Ascending aorta (tissue), 2 donors: ENCODE measurements at regions of chr6 and their contacts with region 1.

Region 1: GRCh38 chr6:5143634-5144311 is 58.6 kb downstream of the PPP1R3G start:
- DNase-seq: peak in 1 of 2 donors; percentile 89
- H3K4me3 ChIP-seq: no peak overlapping the region
- H3K27ac ChIP-seq: no peak overlapping the region
- H3K4me1 ChIP-seq: no peaks in the 10 kb centered on the region
- H3K27me3 ChIP-seq: no peaks in the 10 kb centered on the region
- CTCF ChIP-seq: peak; percentile 77 to 96 (median 83)

Region 2: DNA sequence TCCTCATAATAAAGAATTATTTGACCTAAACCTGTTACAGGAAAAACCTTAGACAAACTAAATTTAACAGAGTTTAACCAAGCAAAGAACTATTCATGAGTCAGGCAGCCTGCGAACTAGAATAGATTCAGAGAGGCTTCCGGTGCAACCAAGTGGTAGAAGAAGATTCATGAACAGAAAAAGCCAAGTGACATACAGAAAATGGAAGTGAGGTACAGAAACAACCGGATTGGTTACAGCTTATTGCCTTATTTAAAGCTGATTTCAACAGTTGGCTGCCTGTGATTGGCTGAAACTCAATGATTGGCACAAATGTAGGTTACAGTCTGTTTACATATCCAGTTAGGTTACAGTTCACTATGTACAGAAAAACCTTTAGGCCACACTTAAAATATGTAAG is 48.5 kb before region 1 on chr6:
- intact Hi-C with region 1: no loop called
- DNase-seq: no peak
- H3K4me3 ChIP-seq: no peak overlapping the region
- H3K27ac ChIP-seq: peak overlapping the region in 1 of 2 donors; percentile 21
- H3K4me1 ChIP-seq: no peaks in the 10 kb centered on the region
- H3K27me3 ChIP-seq: no peaks in the 10 kb centered on the region
- CTCF ChIP-seq: no peak

Region 3: DNA sequence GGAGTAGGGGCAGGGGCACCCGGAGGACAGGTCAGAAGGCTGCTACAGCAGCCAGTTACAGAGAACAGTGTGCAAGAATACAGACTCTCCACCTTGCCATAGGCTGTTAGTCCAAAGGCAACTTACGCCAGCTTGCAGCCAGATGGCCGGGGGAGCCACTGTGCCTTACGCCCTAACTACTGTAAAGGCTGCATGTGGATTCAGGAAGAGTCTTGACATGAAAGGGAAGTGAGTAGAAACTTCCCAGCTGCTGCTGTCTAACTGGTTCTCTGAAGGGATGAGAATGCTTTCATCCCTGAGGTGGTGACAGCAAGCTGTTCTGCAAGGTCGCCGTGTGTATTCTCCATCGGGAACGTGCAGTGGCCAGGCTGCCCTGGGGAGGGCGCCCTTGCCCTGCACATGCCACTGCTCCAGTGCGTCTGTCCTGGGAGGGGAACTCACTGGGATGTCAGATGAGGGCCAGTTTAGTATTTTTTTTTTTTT is 70.8 kb after region 1 on chr6:
- intact Hi-C with region 1: loop called (anchors 2 kb)
- DNase-seq: peak in 1 of 2 donors; percentile 71
- H3K4me3 ChIP-seq: peak overlapping the region in 1 of 2 donors; percentile 36
- H3K27ac ChIP-seq: peak overlapping the region; percentile 3 to 56
- H3K4me1 ChIP-seq: peaks cover 6 to 17% of the 10 kb centered on the region in 2 donors
- H3K27me3 ChIP-seq: no peaks in the 10 kb centered on the region
- CTCF ChIP-seq: peak; percentile 57 to 87 (median 71)

Region 4: DNA sequence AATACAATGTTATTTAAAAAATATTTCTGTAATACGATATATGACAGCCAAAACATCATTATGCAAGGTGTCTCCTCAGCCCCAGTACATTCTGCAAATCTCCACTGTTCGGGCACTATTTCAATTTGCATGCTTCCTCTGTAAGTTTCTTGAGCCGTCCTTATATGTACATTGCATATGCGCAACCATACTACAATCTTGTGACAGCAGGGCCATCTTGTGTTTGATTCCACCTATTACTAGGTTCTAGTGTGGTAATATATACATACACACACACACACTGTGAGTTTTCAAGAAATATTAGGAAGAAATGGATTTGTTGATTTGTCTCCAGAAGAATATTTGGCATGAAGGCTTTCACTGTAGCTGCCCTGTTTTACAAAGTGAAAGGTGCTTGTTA is 107.1 kb after region 1 on chr6:
- intact Hi-C with region 1: loop called (anchors 10 kb)
- DNase-seq: no peak
- H3K4me3 ChIP-seq: no peak overlapping the region
- H3K27ac ChIP-seq: no peak overlapping the region
- H3K4me1 ChIP-seq: no peaks in the 10 kb centered on the region
- H3K27me3 ChIP-seq: no peaks in the 10 kb centered on the region
- CTCF ChIP-seq: no peak

Region 5: GRCh38 chr6:5302995-5303622 is 159.3 kb after region 1 on chr6:
- intact Hi-C with region 1: no loop called
- DNase-seq: no peak
- H3K4me3 ChIP-seq: no peak overlapping the region
- H3K27ac ChIP-seq: no peak overlapping the region
- H3K4me1 ChIP-seq: no peaks in the 10 kb centered on the region
- H3K27me3 ChIP-seq: no peaks in the 10 kb centered on the region
- CTCF ChIP-seq: peak in 1 of 3 experiments; percentile 19

Region 6: DNA sequence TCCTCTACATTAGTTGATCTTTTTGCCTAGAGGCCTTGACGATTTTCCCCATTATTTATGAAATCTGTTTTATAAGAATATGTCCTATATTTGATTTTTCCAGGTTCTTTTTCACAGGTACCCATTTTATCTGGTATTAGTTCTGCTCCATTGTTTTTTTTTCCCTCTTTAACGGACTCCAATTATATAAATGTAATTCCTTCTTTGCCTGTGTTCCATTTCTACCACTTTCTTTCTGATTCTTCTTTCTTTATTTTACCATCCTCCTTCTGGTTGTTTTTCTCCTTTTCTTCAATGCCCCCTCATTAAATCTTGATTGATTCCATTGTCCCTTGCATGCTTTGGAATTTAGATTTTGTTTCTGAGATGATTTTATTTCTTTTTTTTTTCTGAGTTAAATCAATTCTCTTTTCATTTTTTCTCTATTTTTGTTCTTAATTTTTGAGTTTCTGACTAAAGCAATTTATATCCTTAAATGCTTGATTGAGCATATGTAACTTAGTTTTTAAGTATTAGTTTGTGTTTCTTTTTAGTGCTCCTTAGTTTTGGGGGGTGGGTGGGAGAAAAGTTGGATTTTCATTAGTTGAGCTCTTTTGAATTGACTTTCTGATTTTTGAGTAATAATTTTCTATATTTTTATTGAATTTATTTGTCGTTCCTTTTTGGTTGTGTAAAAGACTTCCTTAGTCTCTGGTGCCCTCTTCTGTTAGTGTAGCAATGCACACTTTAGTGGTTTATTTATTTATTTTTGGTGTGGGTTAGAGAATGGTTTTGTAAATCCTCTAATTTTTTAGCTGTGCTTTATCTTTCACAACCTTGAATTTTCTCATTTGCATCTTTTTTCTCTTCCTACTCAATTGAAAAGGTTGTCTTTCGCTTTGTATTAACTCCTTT is 258.3 kb after region 1 on chr6:
- intact Hi-C with region 1: loop called (anchors 10 kb)
- DNase-seq: no peak
- H3K4me3 ChIP-seq: no peak overlapping the region
- H3K27ac ChIP-seq: no peak overlapping the region
- H3K4me1 ChIP-seq: no peaks in the 10 kb centered on the region
- H3K27me3 ChIP-seq: no peaks in the 10 kb centered on the region
- CTCF ChIP-seq: no peak

Region 7: GRCh38 chr6:6315660-6316059 is 1171.9 kb after region 1 on chr6:
- intact Hi-C with region 1: loop called (anchors 10 kb)
- DNase-seq: no peak
- H3K4me3 ChIP-seq: no peak overlapping the region
- H3K27ac ChIP-seq: no peak overlapping the region
- H3K4me1 ChIP-seq: no peaks in the 10 kb centered on the region
- H3K27me3 ChIP-seq: no peaks in the 10 kb centered on the region
- CTCF ChIP-seq: peak; percentile 55 to 68 (median 68)

Region 8: GRCh38 chr6:6547110-6547879 is 1403.5 kb after region 1 on chr6:
- intact Hi-C with region 1: loop called (anchors 1 kb)
- DNase-seq: peak; percentile 48 to 88
- H3K4me3 ChIP-seq: peak overlapping the region; percentile 53 to 67
- H3K27ac ChIP-seq: no peak overlapping the region
- H3K4me1 ChIP-seq: peaks cover 6 to 7% of the 10 kb centered on the region in 2 donors
- H3K27me3 ChIP-seq: no peaks in the 10 kb centered on the region
- CTCF ChIP-seq: peak; percentile 79 to 88 (median 81)